ENCODE measurements at regions of chr14 and their contacts with region 1.

Region 1: GRCh38 chr14:70086685-70087379 is 101.9 kb downstream of the SLC8A3 start:
- DNase-seq: peak; percentile 50 to 51
- H3K4me3 ChIP-seq: no peak overlapping the region
- H3K4me3 Mint-ChIP-seq: no peak overlapping the region
- H3K27ac Mint-ChIP-seq: no peak overlapping the region
- H3K4me1 ChIP-seq: peaks cover 7% of the 10 kb centered on the region
- H3K4me1 Mint-ChIP-seq: peaks cover 8% of the 10 kb centered on the region
- H3K27me3 ChIP-seq: no peaks in the 10 kb centered on the region
- H3K27me3 Mint-ChIP-seq: peaks cover 10% of the 10 kb centered on the region
- CTCF ChIP-seq: peak; percentile 51 to 74

Region 2: GRCh38 chr14:69838881-69839416 is 247.9 kb before region 1 on chr14:
- CTCF ChIA-PET with region 1: no interaction called
- POLR2A ChIA-PET with region 1: no interaction called
- intact Hi-C with region 1: no loop called
- DNase-seq: no peak
- H3K4me3 ChIP-seq: no peak overlapping the region
- H3K4me3 Mint-ChIP-seq: no peak overlapping the region
- H3K27ac Mint-ChIP-seq: no peak overlapping the region
- H3K4me1 ChIP-seq: no peaks in the 10 kb centered on the region
- H3K4me1 Mint-ChIP-seq: no peaks in the 10 kb centered on the region
- H3K27me3 ChIP-seq: no peaks in the 10 kb centered on the region
- H3K27me3 Mint-ChIP-seq: no peaks in the 10 kb centered on the region
- CTCF ChIP-seq: no peak

Region 3: GRCh38 chr14:69987406-69988135 is 99.3 kb before region 1 on chr14:
- CTCF ChIA-PET with region 1: no interaction called
- POLR2A ChIA-PET with region 1: no interaction called
- intact Hi-C with region 1: no loop called
- DNase-seq: no peak
- H3K4me3 ChIP-seq: no peak overlapping the region
- H3K4me3 Mint-ChIP-seq: no peak overlapping the region
- H3K27ac Mint-ChIP-seq: no peak overlapping the region
- H3K4me1 ChIP-seq: peaks cover under 1% of the 10 kb centered on the region; the same call in 1 of the 2 replicates
- H3K4me1 Mint-ChIP-seq: no peaks in the 10 kb centered on the region
- H3K27me3 ChIP-seq: no peaks in the 10 kb centered on the region
- H3K27me3 Mint-ChIP-seq: no peaks in the 10 kb centered on the region
- CTCF ChIP-seq: no peak

Region 4: GRCh38 chr14:70096866-70097265 is 10.0 kb after region 1 on chr14:
- CTCF ChIA-PET with region 1: interaction called, 10 read pairs
- POLR2A ChIA-PET with region 1: no interaction called
- intact Hi-C with region 1: no loop called
- DNase-seq: peak in 1 of 2 experiments; percentile 16
- H3K4me3 ChIP-seq: no peak overlapping the region
- H3K4me3 Mint-ChIP-seq: no peak overlapping the region
- H3K27ac Mint-ChIP-seq: no peak overlapping the region
- H3K4me1 ChIP-seq: no peaks in the 10 kb centered on the region
- H3K4me1 Mint-ChIP-seq: no peaks in the 10 kb centered on the region
- H3K27me3 ChIP-seq: no peaks in the 10 kb centered on the region; the same call in none of the 2 replicates
- H3K27me3 Mint-ChIP-seq: peaks cover 8% of the 10 kb centered on the region
- CTCF ChIP-seq: peak in 1 of 2 experiments; percentile 44

Region 5: DNA sequence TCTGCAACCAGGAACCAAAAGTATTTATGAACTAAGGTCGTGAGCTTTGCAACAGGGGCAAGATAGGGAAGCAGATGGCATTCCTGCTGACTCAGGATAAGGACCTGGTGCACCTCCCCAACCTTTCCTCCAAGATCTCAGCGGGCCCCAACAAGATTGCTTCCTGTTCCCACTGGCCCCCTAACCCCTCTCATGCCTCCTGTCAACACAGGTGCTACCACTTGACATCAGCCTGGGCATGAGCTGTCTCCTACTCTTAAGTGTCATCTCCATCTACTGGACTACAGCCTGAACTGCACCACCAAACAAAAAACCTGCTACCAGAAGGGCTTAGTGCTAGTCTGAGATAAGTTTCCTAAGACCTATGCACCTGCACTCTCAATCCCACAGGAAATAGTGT is 481.0 kb after region 1 on chr14:
- CTCF ChIA-PET with region 1: interaction called, 3 read pairs
- POLR2A ChIA-PET with region 1: no interaction called
- intact Hi-C with region 1: loop called (anchors 5 kb)
- DNase-seq: peak; percentile 43
- H3K4me3 ChIP-seq: no peak overlapping the region
- H3K4me3 Mint-ChIP-seq: no peak overlapping the region
- H3K27ac Mint-ChIP-seq: no peak overlapping the region
- H3K4me1 ChIP-seq: no peaks in the 10 kb centered on the region
- H3K4me1 Mint-ChIP-seq: no peaks in the 10 kb centered on the region
- H3K27me3 ChIP-seq: no peaks in the 10 kb centered on the region
- H3K27me3 Mint-ChIP-seq: no peaks in the 10 kb centered on the region
- CTCF ChIP-seq: peak; percentile 29 to 37